ENCODE measurements at regions of chr11 and their contacts with region 1.

Region 1: GRCh38 chr11:47837292-47837691 is 10.9 kb downstream of the NUP160 start:
- DNase-seq: no peak
- H3K4me3 ChIP-seq: no peak overlapping the region
- H3K27ac ChIP-seq: no peak overlapping the region
- H3K4me1 ChIP-seq: no peaks in the 10 kb centered on the region
- H3K27me3 ChIP-seq: no peaks in the 10 kb centered on the region
- CTCF ChIP-seq: no peak

Region 2: DNA sequence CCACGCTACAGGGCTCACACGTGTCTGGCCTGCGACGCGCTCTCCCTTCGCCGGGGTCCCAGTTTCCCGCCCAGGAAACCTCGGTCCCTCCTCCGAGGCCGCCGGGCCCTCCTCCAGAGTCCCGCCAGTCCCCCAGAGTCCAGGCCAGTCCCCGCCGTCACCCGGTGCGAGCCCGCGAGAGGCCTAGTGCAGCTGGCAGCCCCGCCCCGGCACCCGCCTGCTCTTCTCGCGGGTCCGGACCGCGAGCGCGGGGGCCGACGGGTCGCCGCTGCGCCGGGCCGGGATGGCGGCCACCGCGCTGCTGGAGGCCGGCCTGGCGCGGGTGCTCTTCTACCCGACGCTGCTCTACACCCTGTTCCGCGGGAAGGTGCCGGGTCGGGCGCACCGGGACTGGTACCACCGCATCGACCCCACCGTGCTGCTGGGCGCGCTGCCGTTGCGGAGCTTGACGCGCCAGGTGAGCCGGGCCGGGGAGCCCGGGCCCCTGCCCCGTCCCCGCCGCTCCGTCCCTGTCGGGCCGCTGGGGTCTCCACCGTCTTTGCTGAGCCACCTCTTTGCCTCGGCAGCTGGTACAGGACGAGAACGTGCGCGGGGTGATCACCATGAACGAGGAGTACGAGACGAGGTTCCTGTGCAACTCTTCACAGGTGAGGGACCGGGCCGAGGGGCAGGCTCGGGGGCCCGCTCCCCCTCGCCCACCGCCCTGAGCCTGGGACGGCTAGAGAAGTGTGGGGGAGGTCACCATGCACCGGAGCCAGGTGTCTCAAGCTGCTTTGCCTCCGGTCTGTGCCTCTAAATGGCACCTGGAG is 271.7 kb before region 1 on chr11 and contains the start of gene PTPMT1:
- CTCF ChIA-PET with region 1: no interaction called
- dilution Hi-C with region 1: no loop called
- in situ Hi-C with region 1: no loop called
- intact Hi-C with region 1: no loop called
- DNase-seq: peak; percentile 62
- H3K4me3 ChIP-seq: peak within 1 kb of the TSS; percentile 73 to 96 (median 94)
- H3K27ac ChIP-seq: peak within 1 kb of the TSS; percentile 67
- H3K4me1 ChIP-seq: peaks cover 10% of the 10 kb centered on the region
- H3K27me3 ChIP-seq: no peaks in the 10 kb centered on the region
- CTCF ChIP-seq: no peak
- total RNA-seq, gene PTPMT1: 57.2 to 65.3 TPM

Region 3: GRCh38 chr11:47775240-47775869 is 61.9 kb before region 1 on chr11:
- CTCF ChIA-PET with region 1: no interaction called
- dilution Hi-C with region 1: no loop called
- in situ Hi-C with region 1: loop called in 1 of 2 experiments (anchors 10 kb)
- intact Hi-C with region 1: no loop called
- DNase-seq: no peak
- H3K4me3 ChIP-seq: no peak overlapping the region
- H3K27ac ChIP-seq: no peak overlapping the region
- H3K4me1 ChIP-seq: no peaks in the 10 kb centered on the region
- H3K27me3 ChIP-seq: no peaks in the 10 kb centered on the region
- CTCF ChIP-seq: no peak